Gastrocnemius medialis (tissue), 4 donors: ENCODE measurements at regions of chr11 and their contacts with region 1.

Region 1: DNA sequence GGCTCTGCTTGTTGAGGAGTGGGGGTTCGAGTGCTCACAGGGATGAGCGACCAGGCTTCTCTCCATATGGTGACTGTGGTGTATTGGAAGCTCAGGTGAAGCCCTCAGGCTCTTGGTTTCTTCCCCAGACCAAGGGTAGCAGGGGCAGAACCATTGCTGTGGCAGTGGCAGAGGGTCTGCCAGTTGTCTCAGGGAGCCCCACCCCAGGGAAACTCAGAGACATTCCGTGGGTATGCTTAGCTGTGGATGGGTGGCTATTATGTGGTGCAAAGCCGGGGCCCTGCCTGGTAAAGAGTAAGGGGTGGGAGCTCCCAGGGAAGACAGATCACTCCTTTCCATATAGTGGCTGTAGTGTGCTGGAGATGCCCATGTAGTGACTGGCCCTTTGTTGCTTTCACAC is 167.8 kb downstream of the DLG2 start:
- DNase-seq: no peak
- ATAC-seq: no peak
- H3K4me3 ChIP-seq: no peak overlapping the region
- H3K27ac ChIP-seq: no peak overlapping the region
- H3K4me1 ChIP-seq: no peaks in the 10 kb centered on the region
- H3K27me3 ChIP-seq: no peaks in the 10 kb centered on the region
- CTCF ChIP-seq: no peak
- POLR2A ChIP-seq: no peak

Region 2: GRCh38 chr11:85154294-85154693 is 305.0 kb before region 1 on chr11:
- in situ Hi-C with region 1: no loop called
- intact Hi-C with region 1: no loop called
- DNase-seq: no peak
- ATAC-seq: no peak
- H3K4me3 ChIP-seq: no peak overlapping the region
- H3K27ac ChIP-seq: no peak overlapping the region
- H3K4me1 ChIP-seq: no peaks in the 10 kb centered on the region
- H3K27me3 ChIP-seq: no peaks in the 10 kb centered on the region
- CTCF ChIP-seq: no peak
- POLR2A ChIP-seq: no peak

Region 3: DNA sequence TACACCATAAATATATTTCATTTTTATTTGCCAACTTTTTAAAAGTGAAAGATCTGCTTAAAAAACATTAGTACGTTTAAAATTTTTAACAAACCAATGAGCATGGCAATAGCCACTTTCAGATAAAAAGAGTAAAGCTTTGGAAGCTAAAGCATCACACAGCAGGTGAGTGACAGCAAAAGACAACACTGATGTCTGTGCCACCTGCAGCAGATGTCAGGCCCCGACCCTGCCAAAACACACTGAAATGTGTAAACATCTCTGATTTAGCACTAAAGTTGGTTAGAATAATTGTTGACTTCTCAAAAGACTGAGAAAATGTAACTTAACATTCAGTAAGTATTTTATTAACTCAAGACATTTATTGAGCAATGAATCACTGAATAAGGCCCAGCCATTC is 65.0 kb before region 1 on chr11:
- in situ Hi-C with region 1: loop called in 1 of 4 experiments (anchors 10 kb)
- intact Hi-C with region 1: no loop called
- DNase-seq: no peak
- ATAC-seq: no peak
- H3K4me3 ChIP-seq: no peak overlapping the region
- H3K27ac ChIP-seq: no peak overlapping the region
- H3K4me1 ChIP-seq: no peaks in the 10 kb centered on the region
- H3K27me3 ChIP-seq: no peaks in the 10 kb centered on the region
- CTCF ChIP-seq: no peak
- POLR2A ChIP-seq: no peak

Region 4: DNA sequence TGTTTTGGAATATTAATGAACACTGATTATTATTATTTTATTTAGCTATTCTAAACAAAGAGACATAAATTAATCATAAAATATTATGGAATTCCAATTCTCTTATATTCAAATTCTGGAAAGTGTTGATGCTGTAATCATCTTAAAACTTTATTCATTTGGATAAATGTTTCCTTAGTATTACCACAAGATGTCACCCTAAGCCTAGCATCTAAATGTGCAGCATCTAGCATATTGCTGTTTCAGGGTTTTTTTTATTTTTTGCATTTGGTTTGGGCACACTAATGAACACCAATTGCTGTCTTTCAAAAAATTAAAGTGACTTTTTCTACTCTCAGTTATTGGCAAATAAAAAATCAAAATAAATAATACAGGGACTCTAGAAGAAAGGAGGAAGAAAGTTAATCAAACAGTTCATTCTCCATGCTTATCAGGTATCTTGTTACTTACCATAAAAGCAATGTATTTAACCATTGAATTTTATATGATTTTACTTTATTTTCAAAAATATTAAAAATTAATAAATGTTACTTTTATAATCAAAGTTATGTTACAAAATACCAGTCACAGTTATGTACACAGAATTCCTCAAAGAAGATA is 136.1 kb after region 1 on chr11:
- in situ Hi-C with region 1: no loop called
- intact Hi-C with region 1: no loop called
- DNase-seq: no peak
- ATAC-seq: no peak
- H3K4me3 ChIP-seq: no peak overlapping the region
- H3K27ac ChIP-seq: no peak overlapping the region
- H3K4me1 ChIP-seq: no peaks in the 10 kb centered on the region
- H3K27me3 ChIP-seq: no peaks in the 10 kb centered on the region
- CTCF ChIP-seq: peak; percentile 40 to 78 (median 67)
- POLR2A ChIP-seq: no peak